Head of caudate nucleus (tissue), 42 donors: ENCODE measurements at regions of chr3 and their contacts with region 1.

Region 1: GRCh38 chr3:197501879-197502620 is 53.7 kb downstream of the BDH1 start:
- DNase-seq: peak; percentile 49 to 88 (median 73)

Region 2: DNA sequence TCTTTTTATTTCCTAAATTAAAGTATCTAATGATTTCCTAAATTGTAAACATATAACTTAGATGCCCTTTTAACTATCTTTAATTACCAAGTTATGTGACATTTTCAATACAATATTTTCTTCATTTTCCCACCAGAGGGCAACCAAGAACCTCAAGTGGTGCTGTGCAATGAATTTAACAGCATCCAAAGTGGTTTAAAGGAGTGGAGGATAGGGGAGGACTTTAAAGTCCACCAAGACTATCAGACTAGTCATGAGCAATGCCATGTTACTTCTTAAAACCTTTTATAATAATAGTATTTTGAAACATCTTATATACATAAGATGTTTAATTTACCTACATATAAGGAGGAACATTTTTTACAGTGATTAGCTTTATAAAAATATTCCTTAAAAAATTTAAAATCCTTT is 278.0 kb before region 1 on chr3:
- intact Hi-C with region 1: loop called (anchors 10 kb)
- DNase-seq: peak in 2 of 42 donors; percentile 30 to 60